Common myeloid progenitor, CD34-positive (primary cell): ENCODE measurements at regions of chr17 and their contacts with region 1.

Region 1: DNA sequence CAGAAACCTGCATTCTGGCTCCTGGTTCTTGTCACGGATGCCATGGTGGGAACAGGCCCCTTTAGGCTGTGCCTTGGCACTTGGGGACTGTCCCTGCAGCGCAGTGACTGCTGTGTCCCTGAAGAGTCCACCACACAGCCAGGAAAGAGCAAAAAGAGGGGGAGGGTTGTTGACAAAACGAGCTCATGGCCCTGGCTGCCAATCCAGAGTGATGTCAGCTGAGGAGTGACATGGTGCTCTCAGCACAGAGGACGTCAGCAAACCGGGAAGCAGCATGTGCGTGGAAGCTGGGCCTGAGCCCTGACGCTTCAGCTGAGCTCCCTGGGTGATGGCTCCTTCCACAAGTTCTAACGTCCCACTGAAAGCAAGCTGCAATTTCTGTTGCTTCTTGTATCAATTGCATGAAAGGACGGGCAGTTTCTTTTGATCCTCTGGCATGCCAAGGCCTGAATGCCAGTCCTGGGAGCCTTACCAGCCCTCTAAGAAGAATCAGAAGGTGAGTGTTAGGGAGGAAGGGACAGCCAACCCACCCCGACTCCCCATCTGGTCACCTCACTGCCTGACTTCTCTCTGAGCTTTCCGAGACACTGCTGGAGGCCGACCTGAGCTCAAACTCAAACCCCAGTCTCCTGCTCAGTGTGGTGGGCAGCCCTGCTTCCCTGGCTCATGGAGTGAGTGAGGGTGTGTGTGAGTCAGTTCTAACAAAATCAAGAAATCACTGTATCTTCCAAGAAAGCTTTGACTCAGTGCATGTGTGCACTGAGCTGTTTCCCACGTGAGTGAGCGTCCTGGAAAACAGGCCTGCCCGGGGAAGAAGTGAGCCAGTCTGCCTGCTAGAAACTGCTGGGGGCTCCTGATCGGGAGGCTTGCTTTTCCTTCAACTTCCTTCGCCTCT is 14.7 kb upstream of the WNT3 start:
- DNase-seq: no peak
- H3K4me3 ChIP-seq: no peak overlapping the region
- H3K27ac ChIP-seq: no peak overlapping the region
- H3K4me1 ChIP-seq: no peaks in the 10 kb centered on the region
- H3K27me3 ChIP-seq: peaks cover 0 to 9% (median 0%) of the 10 kb centered on the region in 5 experiments

Region 2: DNA sequence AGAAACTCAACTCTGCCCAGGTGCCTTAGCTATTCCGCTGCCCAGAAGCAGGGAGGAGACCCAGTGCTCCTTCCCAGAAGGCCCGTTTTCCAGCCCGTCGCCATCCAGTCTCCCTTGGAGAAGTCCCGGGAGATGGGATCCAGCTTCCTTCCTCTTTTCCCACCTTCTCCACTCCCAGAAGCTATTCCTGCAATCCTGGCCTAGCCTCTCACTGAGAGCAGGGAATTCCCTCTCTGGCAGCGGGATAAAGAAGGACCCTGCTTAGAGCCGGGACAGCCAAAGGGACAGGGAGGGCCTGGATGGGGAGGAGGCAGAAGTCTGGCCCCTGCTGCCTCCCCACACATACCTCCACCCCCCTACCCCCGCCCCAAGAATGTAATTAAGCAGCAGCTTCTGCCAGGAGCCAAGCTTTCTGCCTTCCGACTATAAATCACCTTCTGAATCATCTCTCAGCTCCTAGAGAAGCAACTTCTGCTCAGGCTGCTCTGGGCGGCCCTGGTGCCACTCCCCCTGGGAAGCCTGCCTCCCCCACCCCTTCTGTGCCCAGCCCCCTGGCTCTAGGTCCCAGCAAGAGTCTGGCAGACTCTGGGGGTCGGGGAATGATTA is 21.1 kb before region 1 on chr17:
- CTCF ChIA-PET with region 1: no interaction called
- POLR2A ChIA-PET with region 1: no interaction called
- DNase-seq: peak in 1 of 3 donors; percentile 8
- H3K4me3 ChIP-seq: no peak overlapping the region
- H3K27ac ChIP-seq: no peak overlapping the region
- H3K4me1 ChIP-seq: peaks cover 0 to 5% (median 3%) of the 10 kb centered on the region in 4 experiments
- H3K27me3 ChIP-seq: peaks cover 2 to 45% (median 20%) of the 10 kb centered on the region in 5 experiments

Region 3: DNA sequence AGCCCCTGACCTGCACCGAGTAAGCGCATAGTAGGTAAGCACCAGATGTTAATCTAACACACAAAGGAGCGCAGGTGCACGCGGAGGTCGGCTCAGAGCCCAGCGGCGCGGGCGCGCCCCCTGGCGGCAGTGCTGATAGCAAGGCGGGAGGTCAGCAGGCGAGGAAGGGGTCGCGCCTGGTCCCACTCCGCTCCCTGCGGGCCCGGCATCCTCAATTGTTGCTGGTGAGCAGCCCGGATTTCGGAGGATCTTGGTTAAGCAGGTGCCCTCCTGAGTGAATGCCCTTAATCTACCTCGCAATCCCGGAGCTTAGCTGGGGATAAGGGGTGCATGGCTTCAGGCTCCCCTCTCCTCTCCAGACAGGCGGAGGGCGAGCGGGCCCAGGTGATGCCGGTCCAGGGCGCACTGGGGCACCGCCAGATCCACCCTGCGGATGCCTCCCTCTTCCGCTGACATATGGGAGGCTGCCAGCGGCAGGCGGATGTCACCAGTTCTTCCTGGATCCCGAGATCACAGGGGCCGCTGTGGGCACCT is 10.7 kb before region 1 on chr17:
- CTCF ChIA-PET with region 1: interaction called, 25 read pairs
- POLR2A ChIA-PET with region 1: no interaction called
- DNase-seq: peak in 2 of 3 donors; percentile 36 to 38
- H3K4me3 ChIP-seq: peak overlapping the region in 1 of 7 experiments; percentile 4
- H3K27ac ChIP-seq: no peak overlapping the region
- H3K4me1 ChIP-seq: peaks cover 0 to 31% (median 21%) of the 10 kb centered on the region in 4 experiments
- H3K27me3 ChIP-seq: peaks cover 3 to 63% (median 33%) of the 10 kb centered on the region in 5 experiments